Sciatic nerve (tissue), 2 donors: ENCODE measurements at regions of chr18 and their contacts with region 1.

Region 1: DNA sequence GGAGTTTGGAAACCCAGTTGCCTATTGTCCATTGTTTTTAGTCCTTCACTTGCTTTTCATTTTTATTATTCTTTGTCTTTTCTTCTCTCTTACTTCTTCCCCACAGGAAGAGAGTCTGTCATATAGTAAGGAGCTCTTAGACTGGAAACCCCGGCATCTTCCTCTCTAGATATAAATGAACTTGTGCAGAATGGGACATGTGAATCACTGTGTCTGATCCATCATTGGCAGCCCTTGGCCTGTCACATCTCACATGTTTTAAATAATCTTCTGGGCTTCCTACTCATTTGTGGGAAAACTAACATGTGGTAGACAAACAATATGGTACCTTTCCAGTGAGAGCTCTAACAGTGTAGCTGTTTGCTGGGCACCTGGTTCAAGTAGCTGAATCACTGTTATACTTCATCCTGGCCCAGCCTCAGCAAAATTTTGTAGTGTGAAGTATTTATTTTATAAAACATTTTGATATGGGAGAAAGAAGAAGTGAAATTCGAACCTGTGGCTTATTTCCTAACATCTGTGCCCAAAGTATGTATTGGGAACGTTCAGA is 112.8 kb downstream of the PHLPP1 start:
- DNase-seq: no peak
- ATAC-seq: no peak

Region 2: GRCh38 chr18:62841405-62841804 is 13.2 kb after region 1 on chr18:
- intact Hi-C with region 1: loop called (anchors 1 kb)
- DNase-seq: no peak
- ATAC-seq: no peak